ENCODE measurements at regions of chr14 and their contacts with region 1.

Region 1: DNA sequence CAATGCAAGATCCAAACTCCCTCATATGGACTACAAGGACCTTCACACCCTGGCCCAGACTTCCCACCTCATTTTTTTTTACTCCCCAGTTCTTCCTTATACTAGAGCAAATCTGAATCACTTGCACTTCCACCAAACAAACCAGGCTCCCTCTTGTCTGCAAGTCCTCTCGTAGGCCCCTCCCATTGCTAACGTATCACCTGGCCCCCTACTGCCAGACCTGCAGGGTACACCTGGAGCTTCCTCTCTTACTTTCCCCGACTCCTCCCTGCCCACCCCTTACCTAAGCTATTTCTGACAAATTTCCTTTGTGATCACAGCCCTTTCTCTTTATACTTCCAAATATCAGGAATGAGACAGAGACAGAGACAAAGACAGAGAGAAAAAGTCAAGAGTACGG is 463.9 kb downstream of the GALC start:
- DNase-seq: no peak
- H3K4me3 ChIP-seq: no peak overlapping the region
- H3K27ac ChIP-seq: no peak overlapping the region
- H3K4me1 ChIP-seq: no peaks in the 10 kb centered on the region; a peak in 1 of 7 replicates
- H3K27me3 ChIP-seq: no peaks in the 10 kb centered on the region
- CTCF ChIP-seq: peak in 2 of 3 experiments; percentile 9 to 23; a peak in 2 of 4 replicates
- EP300 ChIP-seq: no peak
- POLR2A ChIP-seq: no peak
- RAD21 ChIP-seq: no peak

Region 2: DNA sequence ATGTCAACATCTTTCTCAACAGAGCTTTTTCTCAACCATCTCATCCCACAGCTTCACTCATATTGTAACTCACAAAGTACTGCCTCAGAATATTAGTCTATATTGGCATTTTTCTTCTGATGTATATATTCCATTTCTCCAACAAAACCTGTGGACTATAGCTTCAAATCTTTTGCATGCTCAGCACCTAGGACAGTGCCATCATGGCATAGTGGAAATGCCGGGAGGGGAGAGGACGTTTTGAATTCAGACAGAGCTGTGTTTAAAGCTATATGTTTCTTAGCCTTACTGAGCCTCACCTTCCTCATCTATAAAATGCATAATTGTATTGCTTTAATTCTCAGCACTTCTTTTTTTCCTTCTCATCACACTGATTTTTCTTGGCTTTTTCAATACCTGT is 11.3 kb after region 1 on chr14:
- CTCF ChIA-PET with region 1: interaction called, 11 read pairs
- POLR2A ChIA-PET with region 1: no interaction called
- DNase-seq: no peak
- H3K4me3 ChIP-seq: no peak overlapping the region
- H3K27ac ChIP-seq: no peak overlapping the region
- H3K4me1 ChIP-seq: no peaks in the 10 kb centered on the region
- H3K27me3 ChIP-seq: no peaks in the 10 kb centered on the region
- CTCF ChIP-seq: no peak
- EP300 ChIP-seq: no peak
- POLR2A ChIP-seq: no peak
- RAD21 ChIP-seq: no peak

Measured in H1 (cell line).